ENCODE measurements at regions of chr17 and their contacts with region 1.

Region 1: GRCh38 chr17:38428112-38428642 is at the start of gene ARHGAP23:
- DNase-seq: no peak
- ATAC-seq: peak; percentile 81
- H3K4me3 ChIP-seq: peak within 1 kb of the TSS; percentile 68 to 69
- H3K27ac ChIP-seq: peak within 1 kb of the TSS; percentile 84
- H3K4me1 ChIP-seq: peaks cover 14% of the 10 kb centered on the region
- H3K27me3 ChIP-seq: no peaks in the 10 kb centered on the region
- CTCF ChIP-seq: no peak
- total RNA-seq, gene ARHGAP23: 33.0 TPM

Region 2: GRCh38 chr17:38403491-38403890 is 24.7 kb before region 1 on chr17:
- CTCF ChIA-PET with region 1: no interaction called
- POLR2A ChIA-PET with region 1: no interaction called
- in situ Hi-C with region 1: no loop called
- intact Hi-C with region 1: no loop called
- DNase-seq: no peak
- ATAC-seq: no peak
- H3K4me3 ChIP-seq: no peak overlapping the region
- H3K27ac ChIP-seq: no peak overlapping the region
- H3K4me1 ChIP-seq: no peaks in the 10 kb centered on the region
- H3K27me3 ChIP-seq: no peaks in the 10 kb centered on the region
- CTCF ChIP-seq: no peak

Region 3: GRCh38 chr17:38485146-38485468 is 56.9 kb after region 1 on chr17:
- CTCF ChIA-PET with region 1: no interaction called
- POLR2A ChIA-PET with region 1: no interaction called
- in situ Hi-C with region 1: no loop called
- intact Hi-C with region 1: loop called (anchors 10 kb)
- DNase-seq: no peak
- ATAC-seq: no peak
- H3K4me3 ChIP-seq: no peak overlapping the region
- H3K27ac ChIP-seq: no peak overlapping the region
- H3K4me1 ChIP-seq: no peaks in the 10 kb centered on the region
- H3K27me3 ChIP-seq: no peaks in the 10 kb centered on the region
- CTCF ChIP-seq: peak; percentile 42

Region 4: DNA sequence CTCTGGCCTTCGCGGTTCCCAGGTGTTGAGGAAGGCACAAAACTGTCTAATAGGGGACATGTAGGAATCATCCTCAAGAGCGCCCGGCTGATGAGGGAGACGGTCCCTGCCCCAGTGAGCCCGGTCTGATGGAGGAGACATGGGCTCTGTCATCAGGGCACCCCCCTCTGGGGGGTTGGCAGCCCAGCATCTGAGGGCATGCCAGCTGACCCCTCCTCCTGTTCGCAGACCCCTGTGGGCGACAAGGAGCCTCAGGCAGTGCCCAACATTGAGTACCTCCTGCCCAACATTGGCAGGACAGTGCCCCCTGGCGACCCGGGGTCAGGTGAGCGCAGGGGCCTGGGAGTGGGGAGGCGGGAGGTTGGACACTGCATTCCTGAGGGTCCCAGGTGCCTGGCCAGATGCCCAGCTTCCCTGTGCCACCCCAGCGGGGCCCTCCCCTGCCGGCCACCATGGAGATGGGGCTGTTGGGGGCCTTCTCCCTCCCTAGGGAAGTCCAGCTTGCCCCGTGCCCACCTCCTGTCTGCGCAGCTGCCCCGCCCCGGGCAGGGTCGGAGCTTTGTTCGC is 70.1 kb after region 1 on chr17:
- CTCF ChIA-PET with region 1: no interaction called
- POLR2A ChIA-PET with region 1: no interaction called
- in situ Hi-C with region 1: no loop called
- intact Hi-C with region 1: no loop called
- DNase-seq: no peak
- ATAC-seq: no peak
- H3K4me3 ChIP-seq: no peak overlapping the region
- H3K27ac ChIP-seq: no peak overlapping the region
- H3K4me1 ChIP-seq: no peaks in the 10 kb centered on the region
- H3K27me3 ChIP-seq: no peaks in the 10 kb centered on the region
- CTCF ChIP-seq: peak; percentile 17; the same call in 1 of the 2 replicates

Region 5: GRCh38 chr17:38729886-38730525 is 301.8 kb after region 1 on chr17 and contains the start of gene CISD3:
- CTCF ChIA-PET with region 1: no interaction called
- POLR2A ChIA-PET with region 1: no interaction called
- in situ Hi-C with region 1: no loop called
- intact Hi-C with region 1: no loop called
- DNase-seq: no peak
- ATAC-seq: peak; percentile 93
- H3K4me3 ChIP-seq: peak within 1 kb of the TSS; percentile 69 to 83
- H3K27ac ChIP-seq: peak within 1 kb of the TSS; percentile 90
- H3K4me1 ChIP-seq: peaks cover 32% of the 10 kb centered on the region
- H3K27me3 ChIP-seq: no peaks in the 10 kb centered on the region
- CTCF ChIP-seq: peak; percentile 83
- total RNA-seq, gene CISD3: 45.0 TPM

Measured in Panc1 (cell line).